Mammary epithelial cell (primary cell): ENCODE measurements at regions of chr22 and their contacts with region 1.

Region 1: GRCh38 chr22:33000342-33001280 is 57.6 kb downstream of the SYN3 start:
- DNase-seq: peak; percentile 44
- H3K4me3 ChIP-seq: no peak overlapping the region
- H3K27ac ChIP-seq: peak overlapping the region; percentile 14
- H3K4me1 ChIP-seq: peaks cover 53% of the 10 kb centered on the region
- H3K27me3 ChIP-seq: no peaks in the 10 kb centered on the region
- CTCF ChIP-seq: peak; percentile 88 to 97

Region 2: GRCh38 chr22:32665676-32666075 is 334.9 kb before region 1 on chr22:
- CTCF ChIA-PET with region 1: no interaction called
- dilution Hi-C with region 1: no loop called
- in situ Hi-C with region 1: loop called (anchors 25 kb)
- intact Hi-C with region 1: loop called (anchors 1 kb)
- DNase-seq: peak; percentile 82
- H3K4me3 ChIP-seq: no peak overlapping the region
- H3K27ac ChIP-seq: peak overlapping the region; percentile 57
- H3K4me1 ChIP-seq: peaks cover 30% of the 10 kb centered on the region
- H3K27me3 ChIP-seq: no peaks in the 10 kb centered on the region
- CTCF ChIP-seq: no peak

Region 3: GRCh38 chr22:32717337-32718240 is 283.0 kb before region 1 on chr22:
- CTCF ChIA-PET with region 1: no interaction called
- dilution Hi-C with region 1: no loop called
- in situ Hi-C with region 1: no loop called
- intact Hi-C with region 1: no loop called
- DNase-seq: no peak
- H3K4me3 ChIP-seq: no peak overlapping the region
- H3K27ac ChIP-seq: no peak overlapping the region
- H3K4me1 ChIP-seq: peaks cover 4% of the 10 kb centered on the region
- H3K27me3 ChIP-seq: no peaks in the 10 kb centered on the region
- CTCF ChIP-seq: no peak

Region 4: DNA sequence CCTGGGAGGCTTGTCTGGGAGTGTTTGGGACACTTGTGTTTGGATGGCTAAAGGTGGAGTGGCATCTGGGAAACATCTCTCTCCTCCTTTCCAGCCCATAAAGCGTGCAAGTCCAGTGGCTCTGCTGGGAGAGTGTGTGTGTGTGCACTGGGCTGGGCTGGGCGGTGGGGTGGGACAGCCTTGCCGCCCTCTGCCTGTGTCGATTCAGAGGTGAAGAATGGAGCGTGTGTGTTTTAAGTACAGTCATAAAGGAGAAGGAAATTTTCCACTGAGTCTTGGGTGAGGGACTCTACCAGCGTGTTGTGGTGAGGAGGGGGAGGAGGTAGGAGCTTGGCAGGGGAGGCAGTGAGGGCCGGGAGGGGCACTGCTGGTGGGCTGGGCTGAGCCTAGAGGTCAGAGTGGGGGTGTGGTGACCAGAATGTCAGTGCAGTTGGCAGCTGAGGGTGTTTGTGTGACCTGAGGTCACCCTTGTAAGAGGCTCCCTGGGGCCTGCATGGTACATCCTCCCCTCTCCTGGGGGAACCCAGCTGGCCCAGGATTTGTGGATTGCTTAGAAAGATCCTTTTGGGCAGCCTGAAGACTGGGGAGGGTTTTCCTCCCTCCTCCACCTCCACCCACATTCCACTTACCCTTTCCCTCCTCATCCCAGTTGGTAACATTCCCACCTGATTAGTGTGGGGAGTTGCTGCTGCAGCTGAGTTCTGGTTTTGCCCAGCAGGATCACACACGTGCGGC is 197.4 kb before region 1 on chr22:
- CTCF ChIA-PET with region 1: interaction called, 8 read pairs
- dilution Hi-C with region 1: no loop called
- in situ Hi-C with region 1: no loop called
- intact Hi-C with region 1: loop called (anchors 1 kb)
- DNase-seq: peak; percentile 68
- H3K4me3 ChIP-seq: peak overlapping the region; percentile 61 to 89 (median 68)
- H3K27ac ChIP-seq: peak overlapping the region; percentile 41
- H3K4me1 ChIP-seq: peaks cover 21% of the 10 kb centered on the region
- H3K27me3 ChIP-seq: no peaks in the 10 kb centered on the region
- CTCF ChIP-seq: no peak

Region 5: GRCh38 chr22:32926600-32926999 is 74.0 kb before region 1 on chr22:
- CTCF ChIA-PET with region 1: no interaction called
- dilution Hi-C with region 1: no loop called
- in situ Hi-C with region 1: no loop called
- intact Hi-C with region 1: loop called (anchors 1 kb)
- DNase-seq: peak; percentile 52
- H3K4me3 ChIP-seq: no peak overlapping the region
- H3K27ac ChIP-seq: no peak overlapping the region
- H3K4me1 ChIP-seq: no peaks in the 10 kb centered on the region
- H3K27me3 ChIP-seq: no peaks in the 10 kb centered on the region
- CTCF ChIP-seq: peak; percentile 69 to 85